ENCODE measurements at regions of chr4 and their contacts with region 1.

Region 1: GRCh38 chr4:15805583-15806517 is 27.7 kb downstream of the CD38 start:
- DNase-seq: peak; percentile 17 to 64
- ATAC-seq: peak; percentile 85 to 89
- H3K4me3 ChIP-seq: no peak overlapping the region
- H3K27ac ChIP-seq: 0 out of 6 replicates have a peak overlapping the region, but pooled peaks of 1 of the 2 experiments have one; percentile 14
- H3K4me1 ChIP-seq: no peaks in the 10 kb centered on the region
- CTCF ChIP-seq: peak; percentile 74
- EP300 ChIP-seq: no peak
- POLR2A ChIP-seq: no peak
- RAD21 ChIP-seq: peak; percentile 78 to 84

Region 2: GRCh38 chr4:15479089-15479912 is 326.5 kb before region 1 on chr4:
- CTCF ChIA-PET with region 1: interaction called, 18 read pairs
- POLR2A ChIA-PET with region 1: no interaction called
- DNase-seq: peak; percentile 58 to 84
- ATAC-seq: peak; percentile 94 to 96
- H3K4me3 ChIP-seq: peak overlapping the region; percentile 54
- H3K27ac ChIP-seq: peak overlapping the region; percentile 92 to 95
- H3K4me1 ChIP-seq: peaks cover 10% of the 10 kb centered on the region
- CTCF ChIP-seq: peak; percentile 68
- EP300 ChIP-seq: no peak
- POLR2A ChIP-seq: no peak; the same call in 1 of the 2 replicates
- RAD21 ChIP-seq: peak; percentile 76 to 81

Region 3: GRCh38 chr4:15601862-15602261 is 204.0 kb before region 1 on chr4:
- CTCF ChIA-PET with region 1: no interaction called
- POLR2A ChIA-PET with region 1: no interaction called
- DNase-seq: no peak
- ATAC-seq: no peak
- H3K4me3 ChIP-seq: no peak overlapping the region
- H3K27ac ChIP-seq: no peak overlapping the region
- H3K4me1 ChIP-seq: no peaks in the 10 kb centered on the region
- CTCF ChIP-seq: no peak
- EP300 ChIP-seq: no peak
- POLR2A ChIP-seq: no peak
- RAD21 ChIP-seq: no peak

Region 4: DNA sequence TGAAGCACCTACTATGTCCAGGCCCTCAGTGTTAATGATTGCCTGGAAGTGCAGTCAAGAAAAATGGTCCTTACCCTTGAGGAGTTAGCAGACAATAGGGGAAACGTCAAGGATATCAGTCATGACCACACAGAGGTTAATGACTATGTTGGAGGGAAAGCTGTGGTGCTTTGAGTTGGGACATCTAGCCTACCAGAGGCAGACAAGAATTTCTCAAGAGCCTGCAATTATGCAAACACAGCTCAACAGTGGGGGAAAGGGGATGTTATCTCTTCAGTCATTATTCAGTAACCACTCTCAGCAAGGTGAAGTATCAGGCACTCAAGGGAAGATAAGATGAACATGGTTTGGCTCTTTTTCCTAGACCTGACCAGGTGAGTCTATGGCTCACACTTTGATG is 139.7 kb after region 1 on chr4:
- CTCF ChIA-PET with region 1: interaction called, 15 read pairs
- POLR2A ChIA-PET with region 1: no interaction called
- DNase-seq: no peak
- ATAC-seq: no peak
- H3K4me3 ChIP-seq: no peak overlapping the region
- H3K27ac ChIP-seq: no peak overlapping the region
- H3K4me1 ChIP-seq: no peaks in the 10 kb centered on the region
- CTCF ChIP-seq: no peak
- EP300 ChIP-seq: no peak
- POLR2A ChIP-seq: no peak
- RAD21 ChIP-seq: no peak

Region 5: DNA sequence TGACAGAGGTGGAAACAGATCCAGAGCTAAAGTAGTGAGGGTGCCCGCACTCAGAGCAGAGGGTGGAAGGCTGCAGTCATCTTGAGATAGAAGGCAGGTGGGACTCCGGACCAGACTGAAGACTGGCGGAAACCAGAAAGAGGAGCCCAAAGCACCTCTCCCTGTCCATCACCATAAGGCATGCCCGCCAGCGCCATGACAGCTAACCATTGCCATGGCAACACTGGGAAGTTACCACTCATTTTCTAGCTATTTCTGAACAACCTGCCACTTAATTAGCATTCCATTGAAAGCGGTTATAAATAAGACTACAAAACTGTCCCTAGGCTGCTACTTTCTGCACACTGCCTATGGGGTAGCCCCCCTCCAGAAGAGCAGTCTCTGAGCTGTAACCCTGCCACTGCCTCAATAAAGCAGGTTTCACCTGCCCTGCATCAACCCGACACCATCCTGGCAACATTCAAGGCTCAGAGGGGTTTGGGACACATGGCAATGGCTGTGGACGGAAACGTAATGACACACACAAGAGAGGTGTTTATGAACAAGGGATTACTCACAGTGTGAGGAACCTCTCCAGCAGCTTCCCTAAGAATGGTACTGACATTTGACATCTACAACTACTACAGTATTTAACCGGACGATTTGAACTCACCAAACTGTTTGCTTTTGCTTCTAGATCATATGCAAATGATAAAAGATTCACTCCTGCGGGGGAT is 184.9 kb after region 1 on chr4:
- CTCF ChIA-PET with region 1: interaction called, 86 read pairs
- POLR2A ChIA-PET with region 1: no interaction called
- DNase-seq: no peak
- ATAC-seq: no peak
- H3K4me3 ChIP-seq: no peak overlapping the region
- H3K27ac ChIP-seq: no peak overlapping the region
- H3K4me1 ChIP-seq: no peaks in the 10 kb centered on the region
- CTCF ChIP-seq: no peak
- EP300 ChIP-seq: no peak
- POLR2A ChIP-seq: no peak
- RAD21 ChIP-seq: no peak

Region 6: GRCh38 chr4:16006791-16007446 is 201.1 kb after region 1 on chr4:
- CTCF ChIA-PET with region 1: interaction called, 86 read pairs
- POLR2A ChIA-PET with region 1: no interaction called
- DNase-seq: no peak
- ATAC-seq: no peak
- H3K4me3 ChIP-seq: no peak overlapping the region
- H3K27ac ChIP-seq: no peak overlapping the region
- H3K4me1 ChIP-seq: no peaks in the 10 kb centered on the region
- CTCF ChIP-seq: no peak
- EP300 ChIP-seq: no peak
- POLR2A ChIP-seq: no peak
- RAD21 ChIP-seq: no peak